AG04450 (cell line): ENCODE measurements at regions of chr19 and their contacts with region 1.

Region 1: DNA sequence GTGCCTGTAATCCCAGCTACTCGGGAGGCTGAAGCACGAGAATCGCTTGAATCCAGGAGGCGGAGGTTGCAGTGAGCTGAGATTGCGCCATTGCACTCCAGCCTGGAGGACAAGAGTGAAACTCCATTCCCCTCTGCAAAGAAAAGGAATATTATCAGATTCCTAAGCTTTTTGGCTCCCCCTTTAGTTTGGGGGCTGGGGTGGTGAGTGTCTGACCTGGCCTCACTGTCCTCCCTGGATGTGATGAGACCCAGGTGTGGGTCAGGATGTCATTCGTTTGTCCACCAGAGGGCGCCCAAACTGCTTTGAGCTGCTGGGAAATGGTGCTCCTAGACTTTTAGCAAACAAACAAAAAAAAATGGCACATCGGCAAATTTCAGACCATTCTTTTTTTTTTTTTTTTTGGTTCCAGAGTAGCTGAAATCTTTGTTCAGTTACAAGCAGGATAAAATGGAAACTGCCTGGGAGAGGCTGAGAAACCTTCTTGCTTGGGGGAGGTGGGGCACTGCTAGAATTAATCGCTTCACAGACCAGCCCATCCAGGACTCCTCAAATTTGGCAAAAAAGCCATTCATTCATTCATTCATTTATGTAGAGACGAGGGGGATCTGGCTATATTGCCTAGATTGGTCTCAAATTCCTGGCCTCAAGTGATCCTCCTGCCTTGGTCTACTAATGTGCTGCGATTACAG is 29.4 kb downstream of the SPC24 start:
- DNase-seq: peak; percentile 34
- H3K4me3 ChIP-seq: no peak overlapping the region
- H3K27ac ChIP-seq: no peak overlapping the region
- H3K27me3 ChIP-seq: no peaks in the 10 kb centered on the region
- CTCF ChIP-seq: peak; percentile 83

Region 2: GRCh38 chr19:10946964-10947657 is 179.0 kb before region 1 on chr19:
- CTCF ChIA-PET with region 1: interaction called, 11 read pairs
- POLR2A ChIA-PET with region 1: no interaction called
- DNase-seq: no peak
- H3K4me3 ChIP-seq: no peak overlapping the region
- H3K27ac ChIP-seq: peak overlapping the region; percentile 39
- H3K27me3 ChIP-seq: no peaks in the 10 kb centered on the region
- CTCF ChIP-seq: no peak

Region 3: DNA sequence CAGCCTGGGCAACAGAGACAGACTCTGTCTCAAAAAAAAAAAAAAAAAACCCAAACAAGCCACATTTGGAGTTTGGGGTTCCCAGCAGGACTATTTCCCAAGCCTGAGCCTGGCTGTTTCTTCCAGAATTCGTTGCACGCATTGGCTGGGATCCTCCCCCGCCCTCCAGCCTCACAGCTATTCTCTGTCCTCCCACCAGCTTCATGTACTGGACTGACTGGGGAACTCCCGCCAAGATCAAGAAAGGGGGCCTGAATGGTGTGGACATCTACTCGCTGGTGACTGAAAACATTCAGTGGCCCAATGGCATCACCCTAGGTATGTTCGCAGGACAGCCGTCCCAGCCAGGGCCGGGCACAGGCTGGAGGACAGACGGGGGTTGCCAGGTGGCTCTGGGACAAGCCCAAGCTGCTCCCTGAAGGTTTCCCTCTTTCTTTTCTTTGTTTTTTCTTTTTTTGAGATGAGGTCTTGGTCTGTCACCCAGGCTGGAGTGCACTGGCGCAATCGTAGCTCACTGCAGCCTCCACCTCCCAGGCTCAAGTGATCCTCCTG is 10.2 kb before region 1 on chr19:
- CTCF ChIA-PET with region 1: interaction called, 10 read pairs
- POLR2A ChIA-PET with region 1: no interaction called
- DNase-seq: no peak
- H3K4me3 ChIP-seq: no peak overlapping the region
- H3K27ac ChIP-seq: no peak overlapping the region
- H3K27me3 ChIP-seq: no peaks in the 10 kb centered on the region
- CTCF ChIP-seq: no peak

Region 4: GRCh38 chr19:11155373-11156120 is 29.4 kb after region 1 on chr19 and contains the start of gene SPC24:
- CTCF ChIA-PET with region 1: interaction called, 10 read pairs
- POLR2A ChIA-PET with region 1: no interaction called
- DNase-seq: peak; percentile 98
- H3K4me3 ChIP-seq: peak within 1 kb of the TSS; percentile 92
- H3K27ac ChIP-seq: peak within 1 kb of the TSS; percentile 11
- H3K27me3 ChIP-seq: no peaks in the 10 kb centered on the region
- CTCF ChIP-seq: no peak
- polyA plus RNA-seq, gene SPC24: 6.0 and 7.4 TPM in 2 replicates